Tibial artery (tissue), 4 donors: ENCODE measurements at regions of chr11 and their contacts with region 1.

Region 1: DNA sequence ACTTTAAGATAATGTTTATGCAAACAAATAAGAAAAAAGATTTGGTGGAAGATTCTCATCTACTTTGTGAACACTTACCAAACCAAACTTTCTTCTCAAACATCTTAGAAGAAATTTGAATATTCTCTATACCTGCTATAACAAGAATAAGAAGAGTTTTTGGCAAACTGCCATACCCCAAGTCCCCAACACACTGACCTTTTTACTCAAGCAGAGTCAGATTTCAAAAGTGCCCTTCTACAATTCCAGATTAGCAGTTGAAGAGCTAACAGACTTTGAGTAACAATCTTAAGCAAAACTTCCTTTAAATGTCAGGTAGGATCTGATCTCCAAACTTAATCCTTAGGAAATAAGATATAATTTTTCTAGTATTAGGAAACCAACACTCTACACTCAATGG is 33.9 kb downstream of the TSG101 start:
- DNase-seq: no peak
- H3K4me3 ChIP-seq: no peak overlapping the region
- H3K27ac ChIP-seq: no peak overlapping the region
- H3K4me1 ChIP-seq: no peaks in the 10 kb centered on the region
- H3K27me3 ChIP-seq: no peaks in the 10 kb centered on the region
- CTCF ChIP-seq: no peak

Region 2: GRCh38 chr11:18294862-18295261 is 198.0 kb before region 1 on chr11:
- intact Hi-C with region 1: loop called (anchors 10 kb)
- DNase-seq: no peak
- H3K4me3 ChIP-seq: no peak overlapping the region
- H3K27ac ChIP-seq: no peak overlapping the region
- H3K4me1 ChIP-seq: no peaks in the 10 kb centered on the region
- H3K27me3 ChIP-seq: no peaks in the 10 kb centered on the region
- CTCF ChIP-seq: no peak

Region 3: DNA sequence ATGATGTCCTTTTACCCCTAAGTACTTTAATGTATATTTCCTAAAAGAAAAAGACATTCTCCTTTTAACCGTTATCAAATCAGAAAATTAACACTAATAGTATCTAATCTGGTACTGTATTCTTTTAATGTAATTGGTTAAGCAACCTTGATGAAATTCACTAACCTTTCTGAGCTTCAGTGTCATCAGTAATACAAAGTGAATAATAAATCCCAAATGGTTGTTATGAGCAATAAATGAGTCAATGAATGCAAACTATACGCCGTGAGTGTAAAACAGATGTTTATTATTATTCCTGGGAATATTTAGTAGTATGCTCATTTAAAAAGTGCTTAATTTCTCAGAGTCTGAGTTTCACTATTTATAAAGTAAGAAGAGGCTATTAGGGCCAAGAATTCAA is 74.2 kb after region 1 on chr11:
- intact Hi-C with region 1: loop called (anchors 10 kb)
- DNase-seq: no peak
- H3K4me3 ChIP-seq: no peak overlapping the region
- H3K27ac ChIP-seq: no peak overlapping the region
- H3K4me1 ChIP-seq: no peaks in the 10 kb centered on the region
- H3K27me3 ChIP-seq: no peaks in the 10 kb centered on the region
- CTCF ChIP-seq: no peak